Activated naive CD4-positive, alpha-beta T cell treated with anti-CD3 and anti-CD28 coated beads, Interleukin-2, amount 10 ng/mL, durations not matched to agents 7 days and 5 days (primary cell): ENCODE measurements at regions of chr13 and their contacts with region 1.

Region 1: GRCh38 chr13:78978381-78978998 is 319.5 kb upstream of the OBI1 start:
- DNase-seq: peak; percentile 52
- H3K4me3 Mint-ChIP-seq: no peak overlapping the region
- H3K27ac Mint-ChIP-seq: no peak overlapping the region
- H3K4me1 Mint-ChIP-seq: no peaks in the 10 kb centered on the region
- H3K27me3 Mint-ChIP-seq: peaks cover 4% of the 10 kb centered on the region

Region 2: DNA sequence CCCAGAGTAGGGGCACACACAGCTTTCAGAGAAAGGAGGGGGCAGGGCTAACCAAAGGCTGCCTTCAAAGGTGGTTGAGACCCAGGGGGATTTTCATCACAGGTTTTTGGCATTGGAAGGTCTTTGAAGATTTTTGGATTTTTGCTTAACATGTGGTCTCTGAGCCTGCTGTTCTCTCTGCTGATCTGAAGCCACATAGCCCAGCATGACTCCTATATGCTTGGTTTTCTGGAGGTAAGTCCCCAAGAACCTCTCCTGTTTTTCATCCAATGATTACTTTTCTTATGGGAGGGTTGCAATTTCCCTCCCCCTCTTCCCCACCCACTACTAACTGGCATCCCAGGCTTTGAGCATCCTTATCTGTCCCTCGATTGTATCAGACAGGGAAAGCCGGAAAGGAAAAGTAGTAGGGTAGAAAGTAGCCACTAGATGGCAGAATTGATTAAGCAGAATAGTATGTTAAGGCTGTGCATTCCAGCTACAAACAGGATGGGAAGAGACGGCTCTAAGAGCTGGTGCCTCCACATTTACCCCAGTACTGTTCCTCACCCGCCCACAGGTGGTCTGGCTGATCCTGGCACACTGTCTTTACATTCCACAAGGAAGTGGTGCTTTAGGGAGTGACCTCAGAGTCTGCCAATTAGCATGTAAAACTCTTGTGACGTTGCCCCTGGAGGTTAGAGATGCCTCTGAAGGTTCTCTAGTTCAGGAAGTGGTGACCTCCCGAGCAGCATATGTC is 840.9 kb before region 1 on chr13:
- CTCF ChIA-PET with region 1: interaction called, 31 read pairs
- DNase-seq: no peak
- H3K4me3 Mint-ChIP-seq: no peak overlapping the region
- H3K27ac Mint-ChIP-seq: no peak overlapping the region
- H3K4me1 Mint-ChIP-seq: peaks cover 5% of the 10 kb centered on the region
- H3K27me3 Mint-ChIP-seq: no peaks in the 10 kb centered on the region

Region 3: DNA sequence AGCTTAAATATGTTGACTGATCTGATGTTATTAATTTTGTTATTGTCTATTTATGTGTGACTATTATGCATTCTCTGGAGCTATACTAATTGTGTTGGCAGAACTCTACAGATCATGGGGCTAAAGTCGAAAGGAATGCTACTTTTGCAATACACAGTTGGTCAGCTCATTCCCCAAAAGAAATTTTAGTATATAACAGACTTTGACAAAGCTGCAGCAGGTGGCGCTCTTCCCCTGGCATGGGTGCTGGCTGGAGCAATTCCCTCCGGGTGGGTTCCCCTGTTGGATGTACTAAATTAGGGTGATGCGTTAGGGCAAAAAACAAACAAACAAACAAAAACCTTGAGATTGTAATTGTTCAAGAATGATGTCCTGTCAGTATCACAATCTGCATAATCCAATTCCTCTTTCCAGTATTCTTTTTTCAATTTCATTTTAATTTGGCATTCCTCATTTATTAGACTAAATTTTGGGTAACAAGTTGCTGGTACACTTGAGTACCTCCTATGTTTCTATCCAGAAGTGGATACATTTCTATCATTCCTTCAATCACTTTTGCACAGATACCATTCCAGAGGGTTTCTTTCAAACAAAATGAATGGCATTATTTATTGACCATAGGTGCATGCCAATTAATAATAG is 737.1 kb before region 1 on chr13:
- CTCF ChIA-PET with region 1: interaction called, 16 read pairs
- DNase-seq: peak; percentile 43
- H3K4me3 Mint-ChIP-seq: no peak overlapping the region
- H3K27ac Mint-ChIP-seq: no peak overlapping the region
- H3K4me1 Mint-ChIP-seq: no peaks in the 10 kb centered on the region
- H3K27me3 Mint-ChIP-seq: no peaks in the 10 kb centered on the region

Region 4: DNA sequence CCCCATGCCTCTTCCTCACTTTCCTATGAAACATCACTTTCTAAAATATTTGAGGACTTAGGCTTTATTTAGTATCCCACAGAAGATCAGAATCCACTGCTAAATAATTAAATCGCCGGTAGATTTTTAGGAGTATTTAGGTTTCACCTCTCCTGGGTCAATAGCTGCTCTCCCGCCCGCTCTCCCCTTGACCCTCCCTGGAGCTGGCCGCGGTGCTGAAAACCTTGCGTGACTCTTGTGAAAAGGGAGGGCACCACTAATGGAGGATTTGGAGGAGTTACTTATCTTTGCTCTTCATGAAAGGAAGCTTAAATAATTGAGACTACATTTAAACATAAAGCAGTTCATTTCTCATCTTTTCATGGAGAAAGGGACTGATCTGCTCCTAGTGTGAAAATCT is 389.3 kb before region 1 on chr13:
- CTCF ChIA-PET with region 1: no interaction called
- DNase-seq: peak; percentile 41
- H3K4me3 Mint-ChIP-seq: no peak overlapping the region
- H3K27ac Mint-ChIP-seq: no peak overlapping the region
- H3K4me1 Mint-ChIP-seq: no peaks in the 10 kb centered on the region
- H3K27me3 Mint-ChIP-seq: peaks cover 66% of the 10 kb centered on the region